ENCODE measurements at regions of chr12 and their contacts with region 1.

Region 1: DNA sequence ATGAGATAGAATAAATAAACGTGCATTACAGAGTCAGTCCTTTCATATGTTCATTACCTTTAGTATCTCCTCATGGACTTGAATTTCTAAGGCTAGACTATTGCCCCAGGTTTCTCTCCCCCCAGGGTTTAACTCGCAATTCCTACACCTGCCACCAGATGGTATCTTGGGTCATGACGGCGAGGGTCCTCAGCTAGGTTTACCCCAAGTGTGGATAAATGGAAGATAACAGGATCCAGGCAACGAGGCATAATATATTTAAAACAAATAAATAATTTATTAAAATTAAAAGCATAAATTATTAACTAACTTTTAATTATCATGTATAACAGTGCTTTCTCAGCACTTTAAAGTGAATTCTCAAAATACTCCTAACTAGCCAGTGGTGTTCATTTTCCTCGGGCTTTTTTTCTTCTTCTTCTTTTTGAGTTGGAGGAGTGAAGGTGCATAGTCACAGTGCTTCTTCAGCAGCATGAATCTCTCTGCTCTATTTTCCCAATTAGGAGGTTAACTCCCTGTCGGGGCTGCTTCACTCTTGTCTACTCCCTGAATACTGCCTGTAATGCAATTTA is 243.5 kb upstream of the CAND1 start:
- DNase-seq: no peak
- H3K4me3 ChIP-seq: no peak overlapping the region
- H3K27me3 ChIP-seq: no peaks in the 10 kb centered on the region
- CTCF ChIP-seq: peak; percentile 81

Region 2: GRCh38 chr12:67014642-67015041 is 11.0 kb before region 1 on chr12:
- CTCF ChIA-PET with region 1: interaction called, 10 read pairs
- POLR2A ChIA-PET with region 1: no interaction called
- DNase-seq: no peak
- H3K4me3 ChIP-seq: no peak overlapping the region
- H3K27me3 ChIP-seq: no peaks in the 10 kb centered on the region
- CTCF ChIP-seq: no peak